ENCODE measurements at regions of chr10 and their contacts with region 1.

Region 1: GRCh38 chr10:88687853-88688467 is 18.1 kb upstream of the LIPK start:
- DNase-seq: peak; percentile 34
- H3K4me3 ChIP-seq: no peak overlapping the region; a peak in 1 of 4 replicates
- H3K27ac ChIP-seq: no peak overlapping the region
- H3K4me1 ChIP-seq: no peaks in the 10 kb centered on the region; a peak in 1 of 4 replicates
- H3K27me3 ChIP-seq: no peaks in the 10 kb centered on the region
- CTCF ChIP-seq: peak; percentile 87
- EP300 ChIP-seq: no peak
- RAD21 ChIP-seq: peak; percentile 75

Region 2: GRCh38 chr10:88586462-88586861 is 101.5 kb before region 1 on chr10 and contains the start of gene LIPJ:
- CTCF ChIA-PET with region 1: no interaction called
- POLR2A ChIA-PET with region 1: no interaction called
- DNase-seq: no peak
- H3K4me3 ChIP-seq: no peak within 1 kb of the TSS
- H3K27ac ChIP-seq: no peak within 1 kb of the TSS
- H3K4me1 ChIP-seq: no peaks in the 10 kb centered on the region
- H3K27me3 ChIP-seq: no peaks in the 10 kb centered on the region
- CTCF ChIP-seq: no peak
- EP300 ChIP-seq: no peak
- RAD21 ChIP-seq: no peak
- polyA plus RNA-seq, gene LIPJ: not detected in 2 replicates

Region 3: DNA sequence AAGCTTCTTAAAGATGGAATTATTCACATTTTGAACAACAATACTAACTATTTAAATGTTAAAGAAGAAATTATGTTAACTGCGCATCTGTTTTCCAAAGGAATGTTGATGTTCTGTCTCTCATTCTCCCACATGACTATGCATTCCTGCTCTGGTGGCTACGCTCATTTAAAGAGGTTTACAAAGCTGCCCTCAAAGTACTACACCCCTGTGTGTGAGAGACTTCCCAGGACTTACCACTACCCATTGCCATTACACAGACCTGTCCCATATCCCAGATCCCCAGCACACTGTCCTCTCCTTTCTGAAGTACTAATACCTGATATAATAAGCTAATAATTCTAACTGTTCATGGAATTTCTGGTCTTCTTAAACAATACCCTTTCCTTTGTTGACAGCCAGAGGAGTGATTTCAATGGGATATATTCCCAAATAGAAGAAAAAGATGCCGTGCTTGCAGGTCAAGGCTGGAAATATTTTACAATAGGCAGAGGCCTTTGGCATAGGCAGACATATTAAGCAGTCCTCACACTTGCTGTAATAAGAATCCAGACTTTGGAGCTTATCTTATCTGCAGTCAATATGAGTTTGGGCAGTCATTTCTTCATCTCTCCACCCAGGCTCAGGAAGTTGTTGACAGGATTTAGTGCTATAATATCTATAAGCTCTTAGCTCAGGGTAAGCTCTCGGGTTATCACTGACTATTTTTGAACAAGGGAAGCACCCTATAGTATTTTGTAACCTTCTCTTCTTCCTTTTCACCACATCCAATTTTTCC is 11.5 kb before region 1 on chr10:
- CTCF ChIA-PET with region 1: interaction called, 13 read pairs
- POLR2A ChIA-PET with region 1: no interaction called
- DNase-seq: no peak
- H3K4me3 ChIP-seq: no peak overlapping the region
- H3K27ac ChIP-seq: no peak overlapping the region
- H3K4me1 ChIP-seq: no peaks in the 10 kb centered on the region
- H3K27me3 ChIP-seq: no peaks in the 10 kb centered on the region
- CTCF ChIP-seq: no peak
- EP300 ChIP-seq: no peak
- RAD21 ChIP-seq: no peak

Region 4: GRCh38 chr10:88707429-88708285 is 19.7 kb after region 1 on chr10:
- CTCF ChIA-PET with region 1: interaction called, 12 read pairs
- POLR2A ChIA-PET with region 1: no interaction called
- DNase-seq: no peak
- H3K4me3 ChIP-seq: no peak overlapping the region
- H3K27ac ChIP-seq: peak overlapping the region in 1 of 2 experiments; percentile 57; a peak in 2 of 4 replicates
- H3K4me1 ChIP-seq: peaks cover 4 to 12% of the 10 kb centered on the region in 2 experiments; a peak in 2 of 4 replicates
- H3K27me3 ChIP-seq: no peaks in the 10 kb centered on the region
- CTCF ChIP-seq: no peak
- EP300 ChIP-seq: peak in 1 of 2 experiments; percentile 65; a peak in 2 of 4 replicates
- RAD21 ChIP-seq: no peak

Region 5: DNA sequence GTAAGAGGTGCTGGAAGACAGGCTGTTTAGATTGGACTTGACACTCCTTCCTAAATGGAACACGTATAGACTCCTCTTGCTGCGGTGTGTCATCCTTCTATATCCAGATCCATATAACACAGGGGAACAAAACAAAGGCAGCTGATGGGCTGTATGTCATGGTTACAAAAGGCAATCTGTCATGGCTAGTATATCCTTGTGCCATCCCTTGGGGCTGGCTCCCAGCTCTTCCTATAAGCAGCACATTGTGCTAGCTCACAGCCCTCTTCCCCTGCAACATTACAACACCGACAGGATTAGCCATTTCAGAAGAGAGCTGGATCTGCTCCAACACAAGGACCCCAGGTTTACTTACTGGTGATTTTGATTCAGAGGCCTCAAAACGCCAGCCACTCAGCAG is 33.4 kb after region 1 on chr10:
- CTCF ChIA-PET with region 1: interaction called, 12 read pairs
- POLR2A ChIA-PET with region 1: no interaction called
- DNase-seq: no peak
- H3K4me3 ChIP-seq: no peak overlapping the region
- H3K27ac ChIP-seq: no peak overlapping the region
- H3K4me1 ChIP-seq: no peaks in the 10 kb centered on the region
- H3K27me3 ChIP-seq: no peaks in the 10 kb centered on the region
- CTCF ChIP-seq: no peak
- EP300 ChIP-seq: no peak
- RAD21 ChIP-seq: no peak

Region 6: DNA sequence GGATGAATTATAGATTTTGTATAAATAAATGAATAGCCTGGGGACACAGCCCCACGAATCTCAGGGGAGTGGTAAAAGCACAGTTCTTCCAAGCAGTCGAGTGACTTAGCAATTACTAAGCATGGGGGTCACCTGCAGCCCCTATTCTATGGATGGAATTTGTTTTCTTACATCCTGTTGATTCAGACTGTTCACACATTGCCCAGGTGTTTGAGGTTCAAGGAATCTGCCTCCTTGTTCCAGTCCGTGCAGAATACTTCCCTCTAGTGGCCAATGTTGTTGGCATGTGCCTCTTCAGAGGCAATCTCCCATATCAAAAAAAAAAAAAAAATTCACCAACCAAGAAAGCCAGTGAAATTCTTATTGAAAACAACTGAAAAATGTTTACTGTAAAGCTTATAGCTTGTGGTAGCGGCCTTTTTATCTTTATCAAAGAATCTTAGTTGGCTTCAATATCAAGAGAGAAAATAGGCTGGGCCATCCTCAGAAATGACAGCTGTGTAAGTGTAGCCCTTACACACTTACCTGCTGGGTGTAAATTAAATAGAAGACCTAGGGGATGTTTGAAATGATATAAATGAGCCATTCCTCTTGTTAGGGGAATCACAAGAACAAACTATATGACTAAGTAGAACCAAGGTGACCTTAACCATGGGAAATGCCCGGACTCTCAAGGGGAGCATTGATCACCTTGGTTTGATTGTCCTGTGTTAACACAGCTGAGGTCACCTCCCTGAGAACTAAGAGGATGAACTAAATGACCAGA is 122.4 kb after region 1 on chr10:
- CTCF ChIA-PET with region 1: interaction called, 14 read pairs
- POLR2A ChIA-PET with region 1: no interaction called
- DNase-seq: peak; percentile 36
- H3K4me3 ChIP-seq: no peak overlapping the region; a peak in 1 of 4 replicates
- H3K27ac ChIP-seq: no peak overlapping the region
- H3K4me1 ChIP-seq: peaks cover 0 to 1% of the 10 kb centered on the region in 2 experiments; a peak in 1 of 4 replicates
- H3K27me3 ChIP-seq: no peaks in the 10 kb centered on the region
- CTCF ChIP-seq: peak; percentile 92
- EP300 ChIP-seq: no peak
- RAD21 ChIP-seq: peak; percentile 76